GM10248 (cell line): ENCODE measurements at regions of chr14 and their contacts with region 1.

Region 1: GRCh38 chr14:105086833-105087307 is 21.6 kb upstream of the GPR132 start:
- DNase-seq: peak; percentile 87
- CTCF ChIP-seq: peak; percentile 93

Region 2: DNA sequence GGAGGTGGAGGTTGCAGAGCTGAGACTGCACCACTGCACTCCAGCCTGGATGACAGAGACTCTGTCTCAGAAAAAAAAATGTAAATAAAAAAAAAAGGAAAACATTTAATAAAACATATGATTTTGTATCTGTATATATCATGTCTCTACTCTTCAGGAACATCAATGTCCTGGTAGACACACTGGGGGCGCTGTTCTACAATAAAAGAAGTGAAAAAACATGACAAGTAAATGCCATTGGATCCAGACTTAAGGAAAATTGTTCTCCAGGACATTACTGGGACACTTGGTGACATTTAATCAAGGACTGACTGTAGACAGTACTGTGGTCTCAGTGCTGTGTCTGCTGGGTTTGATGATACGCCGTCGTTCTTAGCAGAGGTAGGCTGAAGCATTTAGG is 1473.4 kb before region 1 on chr14:
- CTCF ChIA-PET with region 1: no interaction called
- POLR2A ChIA-PET with region 1: no interaction called
- DNase-seq: no peak
- CTCF ChIP-seq: no peak

Region 3: GRCh38 chr14:104830781-104831180 is 256.1 kb before region 1 on chr14:
- CTCF ChIA-PET with region 1: no interaction called
- POLR2A ChIA-PET with region 1: no interaction called
- DNase-seq: no peak
- CTCF ChIP-seq: no peak

Region 4: GRCh38 chr14:104976198-104977007 is 110.5 kb before region 1 on chr14:
- CTCF ChIA-PET with region 1: interaction called, 19 read pairs
- POLR2A ChIA-PET with region 1: no interaction called
- DNase-seq: peak; percentile 88
- CTCF ChIP-seq: peak; percentile 97

Region 5: DNA sequence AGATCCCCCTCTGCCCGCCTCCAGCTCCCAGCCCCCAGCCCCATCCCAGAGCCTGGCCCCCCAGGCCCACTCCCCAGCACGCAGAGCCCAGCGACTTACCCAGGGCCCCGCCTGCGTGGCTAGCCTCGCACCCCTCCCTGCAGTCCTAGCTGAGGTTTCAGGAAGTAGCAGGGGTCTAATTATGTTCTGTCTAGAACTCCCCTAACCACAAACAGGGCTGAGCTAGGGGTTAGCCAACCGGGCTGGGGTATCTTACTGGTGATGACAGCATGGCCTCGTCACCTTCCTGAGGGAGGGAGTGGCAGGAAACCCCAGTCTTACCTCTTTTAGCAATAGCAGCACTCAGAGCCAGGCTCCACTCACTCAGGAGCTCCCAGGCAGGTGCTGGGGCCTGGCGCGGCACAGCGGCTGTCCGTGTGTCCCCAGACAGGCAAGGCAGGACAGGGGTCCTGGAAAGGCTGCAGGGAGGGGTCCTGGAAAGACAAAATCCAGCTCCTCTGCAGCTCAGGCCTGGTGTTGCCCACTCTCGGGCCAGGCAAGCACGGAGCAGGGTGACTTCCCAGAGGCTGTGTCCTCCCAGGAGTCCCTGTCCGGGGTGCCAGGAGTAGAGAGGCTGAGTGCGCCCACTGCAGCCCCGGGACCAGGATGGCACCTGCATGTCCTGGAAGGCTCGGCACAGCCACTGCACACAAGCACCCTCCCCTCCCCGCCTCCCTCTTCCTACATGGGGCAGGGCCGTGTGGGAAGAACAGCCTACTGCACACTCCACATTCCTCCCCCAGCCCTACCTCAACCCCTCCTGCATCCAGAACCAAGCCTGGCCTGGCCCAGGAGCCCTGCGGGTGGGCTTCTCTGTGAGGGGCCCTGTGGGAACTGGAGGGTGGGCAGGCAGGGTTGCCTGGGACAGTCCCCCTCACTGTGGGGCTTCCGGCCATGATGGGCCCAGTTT is 21.3 kb before region 1 on chr14 and contains the start of gene GPR132:
- CTCF ChIA-PET with region 1: interaction called, 140 read pairs
- POLR2A ChIA-PET with region 1: interaction called, 5 read pairs
- DNase-seq: peak; percentile 91
- CTCF ChIP-seq: no peak

Region 6: GRCh38 chr14:105075379-105076295 is 11.2 kb before region 1 on chr14:
- CTCF ChIA-PET with region 1: interaction called, 128 read pairs
- POLR2A ChIA-PET with region 1: interaction called, 5 read pairs
- DNase-seq: peak; percentile 82
- CTCF ChIP-seq: no peak

Region 7: GRCh38 chr14:105351920-105352851 is 265.3 kb after region 1 on chr14:
- CTCF ChIA-PET with region 1: interaction called, 14 read pairs
- POLR2A ChIA-PET with region 1: no interaction called
- DNase-seq: peak; percentile 94
- CTCF ChIP-seq: peak; percentile 93

Region 8: GRCh38 chr14:105517096-105517495 is 430.2 kb after region 1 on chr14:
- CTCF ChIA-PET with region 1: no interaction called
- POLR2A ChIA-PET with region 1: no interaction called
- DNase-seq: no peak
- CTCF ChIP-seq: no peak